ENCODE measurements at regions of chrX and their contacts with region 1.

Region 1: GRCh38 chrX:41912923-41913322 is 10.4 kb downstream of the CASK start:
- DNase-seq: no peak
- H3K4me3 Mint-ChIP-seq: no peak overlapping the region
- H3K27ac Mint-ChIP-seq: peak overlapping the region; percentile 61
- H3K4me1 Mint-ChIP-seq: peaks cover 47% of the 10 kb centered on the region
- H3K27me3 Mint-ChIP-seq: no peaks in the 10 kb centered on the region
- CTCF ChIP-seq: no peak

Region 2: GRCh38 chrX:41877167-41877566 is 35.8 kb before region 1 on chrX:
- CTCF ChIA-PET with region 1: no interaction called
- intact Hi-C with region 1: loop called (anchors 2 kb)
- DNase-seq: no peak
- H3K4me3 Mint-ChIP-seq: no peak overlapping the region
- H3K27ac Mint-ChIP-seq: no peak overlapping the region
- H3K4me1 Mint-ChIP-seq: peaks cover 49% of the 10 kb centered on the region
- H3K27me3 Mint-ChIP-seq: no peaks in the 10 kb centered on the region
- CTCF ChIP-seq: no peak

Region 3: GRCh38 chrX:41956027-41956426 is 43.1 kb after region 1 on chrX:
- CTCF ChIA-PET with region 1: no interaction called
- intact Hi-C with region 1: no loop called
- DNase-seq: no peak
- H3K4me3 Mint-ChIP-seq: no peak overlapping the region
- H3K27ac Mint-ChIP-seq: no peak overlapping the region
- H3K4me1 Mint-ChIP-seq: no peaks in the 10 kb centered on the region
- H3K27me3 Mint-ChIP-seq: no peaks in the 10 kb centered on the region
- CTCF ChIP-seq: no peak

Region 4: GRCh38 chrX:42093756-42094155 is 180.8 kb after region 1 on chrX:
- CTCF ChIA-PET with region 1: no interaction called
- intact Hi-C with region 1: loop called (anchors 5 kb)
- DNase-seq: peak; percentile 30
- H3K4me3 Mint-ChIP-seq: peak overlapping the region; percentile 27
- H3K27ac Mint-ChIP-seq: peak overlapping the region; percentile 90
- H3K4me1 Mint-ChIP-seq: peaks cover 66% of the 10 kb centered on the region
- H3K27me3 Mint-ChIP-seq: no peaks in the 10 kb centered on the region
- CTCF ChIP-seq: no peak

Measured in Calu3 (cell line).